ENCODE measurements at regions of chr6 and their contacts with region 1.

Region 1: GRCh38 chr6:28895134-28895812 is 28.5 kb downstream of the TRIM27 start:
- DNase-seq: peak; percentile 93
- ATAC-seq: peak; percentile 89 to 93

Region 2: GRCh38 chr6:28757429-28758045 is 137.7 kb before region 1 on chr6:
- intact Hi-C with region 1: no loop called
- DNase-seq: no peak
- ATAC-seq: no peak

Region 3: DNA sequence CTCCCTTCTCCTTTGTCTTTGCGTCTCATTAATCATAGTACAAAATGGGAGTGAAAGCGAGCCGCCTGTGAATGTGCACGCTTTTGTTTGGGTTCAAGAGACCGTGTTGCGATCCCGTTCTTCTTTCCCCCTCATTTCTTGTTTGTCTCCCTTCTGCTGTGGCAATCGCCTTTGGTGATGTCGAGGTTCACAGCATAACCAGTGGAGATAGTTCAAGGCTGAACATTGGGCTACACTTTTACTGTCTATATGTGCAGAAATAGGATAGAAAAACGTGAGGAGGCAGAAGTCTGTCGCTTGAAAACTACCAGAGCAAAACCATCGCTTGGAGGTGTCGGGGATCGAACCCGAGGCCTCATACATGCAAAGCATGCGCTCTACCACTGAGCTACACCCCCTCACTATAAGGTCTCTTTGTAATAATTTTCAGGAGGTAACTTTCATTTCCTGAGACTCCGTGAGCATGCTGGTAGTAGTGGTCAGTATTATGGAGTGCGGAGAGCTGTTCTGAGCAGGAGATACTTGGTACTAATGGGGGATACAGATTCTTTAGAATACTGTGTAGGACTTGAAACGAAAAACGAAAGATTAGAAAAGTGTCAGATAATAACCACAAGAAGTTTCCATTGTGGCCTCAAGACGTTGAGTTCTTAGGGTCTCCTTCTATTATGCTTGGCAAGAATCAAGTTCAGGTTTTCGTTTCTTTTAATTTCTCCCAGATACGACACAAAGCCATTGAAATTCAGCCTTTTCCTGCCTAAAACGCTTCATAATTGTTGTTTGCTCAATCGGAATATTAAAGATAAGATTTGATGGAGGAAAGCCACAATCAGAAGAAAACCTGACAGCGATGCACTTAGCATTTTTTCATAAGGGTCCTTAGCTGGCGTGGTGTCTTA is 78.1 kb before region 1 on chr6:
- intact Hi-C with region 1: no loop called
- DNase-seq: no peak
- ATAC-seq: no peak

Region 4: DNA sequence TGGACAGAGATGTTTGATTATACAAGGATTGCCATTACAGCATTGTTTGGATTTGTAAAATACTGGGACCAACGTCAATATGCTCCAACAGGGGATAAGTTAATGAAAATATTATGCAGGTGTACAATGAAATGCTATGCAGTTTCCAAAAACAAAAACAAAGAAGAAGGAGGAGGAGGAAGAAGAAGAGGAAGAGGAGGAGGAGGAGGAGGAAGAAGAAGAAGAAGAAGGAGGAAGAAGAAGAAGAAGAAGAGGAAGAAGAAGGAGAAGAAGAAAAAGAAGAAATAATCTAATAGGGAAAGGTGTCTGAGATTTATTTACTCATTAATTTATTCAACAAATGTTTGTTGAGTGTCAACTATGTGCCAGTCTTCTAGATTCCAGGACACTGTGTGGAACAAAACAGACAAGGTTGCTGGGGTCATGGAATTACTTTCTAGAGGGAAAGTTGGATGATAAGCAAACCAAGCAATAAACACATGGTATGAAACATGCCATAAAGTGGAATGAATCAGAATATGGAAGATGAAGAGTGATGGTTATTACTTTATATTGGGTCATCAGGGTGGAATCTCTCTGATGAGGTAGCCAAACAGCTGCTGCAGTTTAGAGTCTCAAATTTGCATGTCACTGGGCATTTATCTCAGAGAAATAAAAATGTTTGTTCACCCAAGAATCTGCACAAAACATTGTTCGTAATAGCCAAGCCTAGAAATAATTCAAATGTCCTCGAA is 34.8 kb after region 1 on chr6:
- intact Hi-C with region 1: no loop called
- DNase-seq: no peak
- ATAC-seq: no peak

Region 5: GRCh38 chr6:28940858-28941680 is 45.8 kb after region 1 on chr6:
- intact Hi-C with region 1: loop called in 1 of 2 experiments (anchors 5 kb)
- DNase-seq: peak; percentile 77
- ATAC-seq: peak; percentile 75 to 93